ENCODE measurements at regions of chr9 and their contacts with region 1.

Region 1: DNA sequence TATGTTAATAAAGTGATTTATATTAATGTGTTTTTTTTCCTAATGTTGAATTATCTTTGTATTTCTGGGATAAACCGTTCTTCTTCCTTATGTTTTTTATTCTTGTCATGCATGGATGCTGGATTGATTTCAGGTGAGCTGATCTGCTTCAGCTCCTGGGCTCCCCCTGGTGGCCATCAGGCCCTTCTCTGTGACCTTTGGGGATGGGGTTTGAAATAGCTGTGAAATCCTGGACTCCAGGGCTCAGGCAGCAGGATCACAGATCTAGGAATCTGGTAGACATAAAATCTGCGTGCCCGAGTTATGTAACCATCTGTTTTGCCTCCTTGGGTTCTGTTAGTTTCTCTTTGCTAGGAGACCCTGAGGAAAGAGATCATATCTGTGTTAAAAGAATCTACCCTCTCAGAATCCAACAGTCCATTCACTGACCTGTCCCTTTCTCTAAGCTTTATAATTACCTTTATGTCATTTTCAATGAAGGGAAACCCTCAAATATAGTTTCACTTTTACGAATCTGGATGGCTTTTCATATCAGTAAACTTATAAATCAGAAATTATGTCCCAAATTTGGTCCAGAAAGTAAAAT is 12.2 kb upstream of the OR13J1 start:
- DNase-seq: peak; percentile 46 to 91
- H3K4me3 ChIP-seq: no peak overlapping the region
- H3K27ac ChIP-seq: no peak overlapping the region
- H3K4me1 ChIP-seq: no peaks in the 10 kb centered on the region; a peak in 2 of 7 replicates
- H3K27me3 ChIP-seq: no peaks in the 10 kb centered on the region
- CTCF ChIP-seq: peak; percentile 92 to 96 (median 95)
- EP300 ChIP-seq: no peak
- POLR2A ChIP-seq: no peak
- RAD21 ChIP-seq: peak; percentile 83 to 91

Region 2: GRCh38 chr9:35835216-35835632 is 47.1 kb before region 1 on chr9:
- CTCF ChIA-PET with region 1: interaction called, 23 read pairs
- POLR2A ChIA-PET with region 1: interaction called, 4 read pairs
- DNase-seq: no peak
- H3K4me3 ChIP-seq: no peak overlapping the region
- H3K27ac ChIP-seq: no peak overlapping the region
- H3K4me1 ChIP-seq: no peaks in the 10 kb centered on the region; a peak in 2 of 7 replicates
- H3K27me3 ChIP-seq: no peaks in the 10 kb centered on the region; a peak in 1 of 7 replicates
- CTCF ChIP-seq: peak; percentile 55 to 82 (median 72)
- EP300 ChIP-seq: no peak
- POLR2A ChIP-seq: no peak
- RAD21 ChIP-seq: peak; percentile 50 to 66

Region 3: GRCh38 chr9:35844716-35845270 is 37.6 kb before region 1 on chr9:
- CTCF ChIA-PET with region 1: interaction called, 15 read pairs
- POLR2A ChIA-PET with region 1: no interaction called
- DNase-seq: no peak
- H3K4me3 ChIP-seq: peak overlapping the region in 1 of 4 experiments; percentile 70; a peak in 2 of 8 replicates
- H3K27ac ChIP-seq: no peak overlapping the region
- H3K4me1 ChIP-seq: peaks cover 11 to 25% (median 14%) of the 10 kb centered on the region in 4 experiments
- H3K27me3 ChIP-seq: peaks cover 0 to 12% (median 9%) of the 10 kb centered on the region in 4 experiments; a peak in 6 of 7 replicates
- CTCF ChIP-seq: no peak
- EP300 ChIP-seq: no peak
- POLR2A ChIP-seq: no peak
- RAD21 ChIP-seq: no peak

Region 4: DNA sequence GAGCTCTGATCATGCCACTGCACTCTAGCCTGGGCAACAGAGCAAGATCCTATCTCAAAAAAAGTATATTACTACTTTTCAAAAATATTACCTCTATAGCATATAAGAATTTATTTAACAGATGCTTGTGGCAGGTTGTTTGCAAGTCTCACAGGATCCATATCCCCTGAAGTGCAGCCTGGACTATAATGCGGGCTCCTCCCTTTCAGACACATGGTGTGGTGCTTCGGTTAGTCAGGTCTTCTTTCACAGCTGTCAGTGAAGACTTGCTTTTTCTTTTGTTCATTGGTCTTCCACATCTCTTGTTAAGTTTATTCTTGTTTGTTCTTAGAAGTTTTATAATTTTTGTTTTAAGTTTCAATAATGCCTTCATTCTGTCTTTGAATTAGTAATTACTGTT is 14.2 kb after region 1 on chr9:
- CTCF ChIA-PET with region 1: interaction called, 20 read pairs
- POLR2A ChIA-PET with region 1: interaction called, 3 read pairs
- DNase-seq: no peak
- H3K4me3 ChIP-seq: no peak overlapping the region
- H3K27ac ChIP-seq: no peak overlapping the region
- H3K4me1 ChIP-seq: no peaks in the 10 kb centered on the region
- H3K27me3 ChIP-seq: no peaks in the 10 kb centered on the region
- CTCF ChIP-seq: no peak
- EP300 ChIP-seq: no peak
- POLR2A ChIP-seq: no peak
- RAD21 ChIP-seq: no peak